Activated naive CD4-positive, alpha-beta T cell treated with anti-CD3 and anti-CD28 coated beads for 36 hours (primary cell): ENCODE measurements at regions of chr5 and their contacts with region 1.

Region 1: DNA sequence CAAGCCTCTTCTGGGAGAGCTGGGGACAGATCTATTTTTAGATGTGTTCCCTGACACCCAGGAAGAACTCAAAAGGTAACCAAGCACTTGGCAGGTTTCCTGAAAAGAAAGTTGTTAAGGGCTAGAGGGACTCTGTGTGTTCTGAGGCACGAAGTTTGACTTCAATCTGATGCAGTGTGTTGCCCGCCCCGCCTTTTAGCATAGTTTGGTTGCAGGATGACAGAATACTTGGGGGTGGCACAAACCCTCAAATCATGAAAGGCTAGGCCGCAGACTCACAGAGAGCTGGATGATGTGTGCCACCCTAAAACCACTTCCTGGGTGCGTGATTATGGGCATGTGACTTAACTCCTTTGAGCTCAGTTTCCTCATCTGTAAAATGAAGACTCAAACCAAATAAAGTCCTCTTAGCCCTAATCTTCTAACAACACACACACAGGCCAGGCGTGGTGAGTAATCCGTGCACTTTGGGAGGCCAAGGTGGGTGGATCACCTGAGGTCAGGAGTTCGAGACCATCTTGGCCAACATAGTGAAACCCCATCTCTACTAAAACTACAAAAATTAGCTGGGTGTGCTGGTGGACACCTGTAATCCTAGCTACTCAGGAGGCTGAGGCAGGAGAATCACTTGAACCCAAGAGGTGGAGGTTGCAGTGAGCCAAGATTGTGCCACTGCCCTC is 12.8 kb upstream of the NDFIP1 start:
- DNase-seq: peak; percentile 95
- H3K4me3 Mint-ChIP-seq: peak overlapping the region; percentile 48
- H3K27ac Mint-ChIP-seq: peak overlapping the region; percentile 96
- H3K4me1 Mint-ChIP-seq: peaks cover 81% of the 10 kb centered on the region
- H3K27me3 Mint-ChIP-seq: no peaks in the 10 kb centered on the region

Region 2: GRCh38 chr5:141605523-141606277 is 490.1 kb before region 1 on chr5:
- CTCF ChIA-PET with region 1: no interaction called
- intact Hi-C with region 1: loop called (anchors 10 kb)
- DNase-seq: peak; percentile 83
- H3K4me3 Mint-ChIP-seq: peak overlapping the region; percentile 32
- H3K27ac Mint-ChIP-seq: peak overlapping the region; percentile 90
- H3K4me1 Mint-ChIP-seq: peaks cover 87% of the 10 kb centered on the region
- H3K27me3 Mint-ChIP-seq: no peaks in the 10 kb centered on the region

Region 3: GRCh38 chr5:142006363-142007236 is 89.2 kb before region 1 on chr5:
- CTCF ChIA-PET with region 1: interaction called, 3 read pairs
- intact Hi-C with region 1: loop called (anchors 1 kb)
- DNase-seq: peak; percentile 86
- H3K4me3 Mint-ChIP-seq: peak overlapping the region; percentile 69
- H3K27ac Mint-ChIP-seq: peak overlapping the region; percentile 100
- H3K4me1 Mint-ChIP-seq: peaks cover 87% of the 10 kb centered on the region
- H3K27me3 Mint-ChIP-seq: no peaks in the 10 kb centered on the region

Region 4: GRCh38 chr5:142024771-142025304 is 71.0 kb before region 1 on chr5:
- CTCF ChIA-PET with region 1: interaction called, 4 read pairs
- intact Hi-C with region 1: loop called (anchors 2 kb)
- DNase-seq: peak; percentile 94
- H3K4me3 Mint-ChIP-seq: peak overlapping the region; percentile 91
- H3K27ac Mint-ChIP-seq: peak overlapping the region; percentile 99
- H3K4me1 Mint-ChIP-seq: peaks cover 21% of the 10 kb centered on the region
- H3K27me3 Mint-ChIP-seq: no peaks in the 10 kb centered on the region

Region 5: GRCh38 chr5:142053426-142054151 is 42.2 kb before region 1 on chr5:
- CTCF ChIA-PET with region 1: interaction called, 6 read pairs
- intact Hi-C with region 1: loop called (anchors 1 kb)
- DNase-seq: peak; percentile 50
- H3K4me3 Mint-ChIP-seq: peak overlapping the region; percentile 10
- H3K27ac Mint-ChIP-seq: no peak overlapping the region
- H3K4me1 Mint-ChIP-seq: peaks cover 32% of the 10 kb centered on the region
- H3K27me3 Mint-ChIP-seq: no peaks in the 10 kb centered on the region

Region 6: GRCh38 chr5:142175039-142175438 is 79.2 kb after region 1 on chr5:
- CTCF ChIA-PET with region 1: no interaction called
- intact Hi-C with region 1: no loop called
- DNase-seq: no peak
- H3K4me3 Mint-ChIP-seq: no peak overlapping the region
- H3K27ac Mint-ChIP-seq: no peak overlapping the region
- H3K4me1 Mint-ChIP-seq: no peaks in the 10 kb centered on the region
- H3K27me3 Mint-ChIP-seq: peaks cover 2% of the 10 kb centered on the region